Activated B cell treated with CpG ODN at 0.5 μM for 24 hours (primary cell): ENCODE measurements at regions of chr11 and their contacts with region 1.

Region 1: DNA sequence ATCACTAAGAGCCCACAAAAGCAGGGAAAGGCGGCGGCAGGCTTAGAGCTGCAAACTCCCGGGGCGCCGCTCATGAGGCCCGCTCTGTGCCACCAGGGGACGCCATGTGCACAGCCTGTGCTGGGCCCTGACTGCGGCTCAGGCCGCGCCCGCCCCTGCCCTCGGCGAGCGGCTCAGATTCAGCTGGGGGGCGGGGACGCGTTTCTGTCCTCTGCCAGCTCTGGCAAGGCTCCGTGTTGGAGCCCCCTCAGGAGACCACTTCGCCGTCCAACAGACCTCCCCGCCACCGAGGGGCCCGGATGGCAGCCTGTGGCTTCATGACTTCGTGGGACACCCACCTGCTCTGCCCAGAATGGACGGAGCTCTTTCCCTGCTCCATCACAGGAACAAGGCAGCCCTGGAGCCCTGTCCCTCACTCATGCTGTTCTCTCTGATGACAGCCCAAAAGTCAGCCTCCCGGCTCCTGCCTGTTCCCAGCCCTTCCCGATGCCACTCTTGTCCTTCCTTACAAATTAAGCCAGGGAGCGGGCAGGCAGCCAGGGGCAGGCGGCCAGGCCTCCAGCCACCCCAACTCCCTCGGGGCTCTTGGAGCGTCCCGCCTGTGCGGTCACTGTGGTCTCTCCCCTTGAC is 69.1 kb downstream of the NAT10 start:
- DNase-seq: peak; percentile 75
- ATAC-seq: peak; percentile 99
- H3K4me3 Mint-ChIP-seq: peak overlapping the region; percentile 63
- H3K27ac Mint-ChIP-seq: no peak overlapping the region
- H3K4me1 Mint-ChIP-seq: peaks cover 36% of the 10 kb centered on the region
- H3K27me3 Mint-ChIP-seq: no peaks in the 10 kb centered on the region
- CTCF ChIP-seq: no peak

Region 2: GRCh38 chr11:33808228-33808828 is 366.2 kb before region 1 on chr11:
- CTCF ChIA-PET with region 1: interaction called, 3 read pairs
- POLR2A ChIA-PET with region 1: no interaction called
- intact Hi-C with region 1: loop called (anchors 10 kb)
- DNase-seq: peak; percentile 76
- ATAC-seq: peak; percentile 91
- H3K4me3 Mint-ChIP-seq: no peak overlapping the region
- H3K27ac Mint-ChIP-seq: no peak overlapping the region
- H3K4me1 Mint-ChIP-seq: no peaks in the 10 kb centered on the region
- H3K27me3 Mint-ChIP-seq: peaks cover 6% of the 10 kb centered on the region
- CTCF ChIP-seq: peak; percentile 95

Region 3: GRCh38 chr11:34185926-34186841 is 11.7 kb after region 1 on chr11:
- CTCF ChIA-PET with region 1: interaction called, 18 read pairs
- POLR2A ChIA-PET with region 1: interaction called, 6 read pairs
- intact Hi-C with region 1: no loop called
- DNase-seq: no peak
- ATAC-seq: no peak
- H3K4me3 Mint-ChIP-seq: no peak overlapping the region
- H3K27ac Mint-ChIP-seq: no peak overlapping the region
- H3K4me1 Mint-ChIP-seq: peaks cover 26% of the 10 kb centered on the region
- H3K27me3 Mint-ChIP-seq: no peaks in the 10 kb centered on the region
- CTCF ChIP-seq: no peak

Region 4: GRCh38 chr11:34243726-34244464 is 69.4 kb after region 1 on chr11:
- CTCF ChIA-PET with region 1: interaction called, 13 read pairs
- POLR2A ChIA-PET with region 1: interaction called, 22 read pairs
- intact Hi-C with region 1: no loop called
- DNase-seq: no peak
- ATAC-seq: peak; percentile 33
- H3K4me3 Mint-ChIP-seq: peak overlapping the region; percentile 72
- H3K27ac Mint-ChIP-seq: peak overlapping the region; percentile 92
- H3K4me1 Mint-ChIP-seq: peaks cover 83% of the 10 kb centered on the region
- H3K27me3 Mint-ChIP-seq: no peaks in the 10 kb centered on the region
- CTCF ChIP-seq: no peak

Region 5: DNA sequence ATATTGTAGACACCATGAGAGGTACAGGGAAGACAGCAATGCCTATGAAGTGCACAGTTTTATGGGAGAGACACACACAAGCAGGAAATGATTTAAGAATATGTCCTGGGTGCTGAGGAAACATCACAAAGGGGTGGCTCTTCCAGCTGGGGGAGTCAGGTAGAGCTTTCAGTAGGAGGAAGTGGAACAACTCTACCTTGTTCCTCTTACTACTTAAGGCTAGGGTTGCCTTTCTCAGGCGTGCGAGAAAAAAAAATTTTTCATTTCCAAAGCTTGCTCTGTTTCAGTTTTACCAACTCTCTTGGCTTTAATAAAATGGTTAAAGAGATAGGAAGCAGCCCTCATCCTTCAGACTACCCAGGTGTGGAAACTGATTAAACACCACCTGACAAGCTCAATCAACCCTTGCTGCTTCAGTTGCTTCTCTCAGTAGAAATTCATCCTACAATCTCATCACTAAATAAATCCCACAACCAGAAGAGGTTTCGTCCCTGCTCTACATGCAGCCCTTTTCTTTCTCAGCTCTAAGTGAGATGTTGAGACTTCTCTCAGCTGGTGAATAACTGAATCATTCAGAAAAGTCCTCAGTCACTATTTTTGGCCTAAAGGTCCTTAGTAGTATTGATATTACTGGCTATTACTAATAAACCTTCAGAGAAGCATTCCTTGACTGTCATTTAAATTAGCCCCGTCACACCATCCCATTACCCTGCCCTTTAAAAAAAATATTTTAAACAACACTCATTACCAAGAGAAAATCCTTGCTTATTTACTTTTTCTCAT is 177.4 kb after region 1 on chr11:
- CTCF ChIA-PET with region 1: interaction called, 100 read pairs
- POLR2A ChIA-PET with region 1: interaction called, 123 read pairs
- intact Hi-C with region 1: no loop called
- DNase-seq: no peak
- ATAC-seq: peak; percentile 44
- H3K4me3 Mint-ChIP-seq: peak overlapping the region; percentile 7
- H3K27ac Mint-ChIP-seq: peak overlapping the region; percentile 39
- H3K4me1 Mint-ChIP-seq: peaks cover 49% of the 10 kb centered on the region
- H3K27me3 Mint-ChIP-seq: peaks cover 6% of the 10 kb centered on the region
- CTCF ChIP-seq: no peak

Region 6: DNA sequence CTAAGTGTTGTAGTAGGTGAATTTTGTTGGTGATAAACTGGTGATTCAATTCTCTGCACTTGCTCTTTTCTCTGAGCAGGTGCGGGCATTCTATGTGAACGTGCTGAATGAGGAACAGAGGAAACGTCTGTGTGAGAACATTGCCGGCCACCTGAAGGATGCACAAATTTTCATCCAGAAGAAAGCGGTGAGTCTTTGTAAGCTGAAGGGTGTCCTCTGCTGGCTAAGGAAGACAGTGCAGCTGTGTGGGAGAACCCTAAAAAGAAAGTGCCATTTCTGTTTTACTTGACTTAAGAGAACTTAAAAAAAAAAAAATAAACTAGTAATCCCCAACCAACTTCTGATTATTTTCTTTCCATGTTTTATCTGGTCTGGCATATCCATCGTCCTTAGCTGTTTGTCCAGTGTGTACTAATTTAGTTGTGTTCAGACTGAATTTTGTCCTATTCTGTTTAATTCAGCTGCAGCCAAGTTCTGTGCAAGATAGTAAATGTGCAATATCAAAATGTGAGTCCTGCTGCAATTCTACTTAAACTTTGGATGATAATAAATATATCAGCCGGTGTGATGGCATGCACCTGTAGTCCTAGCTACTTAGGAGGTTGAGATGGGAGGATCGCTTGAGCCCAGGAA is 293.8 kb after region 1 on chr11:
- CTCF ChIA-PET with region 1: interaction called, 4 read pairs
- POLR2A ChIA-PET with region 1: no interaction called
- intact Hi-C with region 1: loop called (anchors 10 kb)
- DNase-seq: no peak
- ATAC-seq: peak; percentile 66
- H3K4me3 Mint-ChIP-seq: no peak overlapping the region
- H3K27ac Mint-ChIP-seq: no peak overlapping the region
- H3K4me1 Mint-ChIP-seq: no peaks in the 10 kb centered on the region
- H3K27me3 Mint-ChIP-seq: no peaks in the 10 kb centered on the region
- CTCF ChIP-seq: no peak

Region 7: DNA sequence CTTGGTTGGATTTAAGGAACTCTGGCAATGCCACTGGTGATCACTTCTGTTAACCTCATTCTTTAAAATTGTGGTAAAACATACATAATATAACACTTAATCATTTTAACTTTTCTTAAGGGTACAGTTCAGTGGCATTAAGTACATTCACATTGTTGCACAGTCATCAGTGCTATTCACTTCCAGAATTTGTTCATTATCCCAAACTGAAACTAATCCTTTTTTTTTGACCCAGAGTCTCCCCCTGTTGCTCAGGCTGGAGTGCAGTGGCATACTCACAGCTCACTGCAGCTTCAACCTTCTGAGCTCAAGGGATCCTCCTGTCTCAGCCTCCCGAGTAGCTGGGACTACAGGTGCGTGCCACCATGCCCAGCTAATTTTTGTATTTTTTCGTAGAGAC is 328.4 kb after region 1 on chr11:
- CTCF ChIA-PET with region 1: no interaction called
- POLR2A ChIA-PET with region 1: no interaction called
- intact Hi-C with region 1: no loop called
- DNase-seq: no peak
- ATAC-seq: no peak
- H3K4me3 Mint-ChIP-seq: no peak overlapping the region
- H3K27ac Mint-ChIP-seq: no peak overlapping the region
- H3K4me1 Mint-ChIP-seq: no peaks in the 10 kb centered on the region
- H3K27me3 Mint-ChIP-seq: peaks cover 12% of the 10 kb centered on the region
- CTCF ChIP-seq: no peak